PC-3 (cell line): ENCODE measurements at regions of chr9 and their contacts with region 1.

Region 1: DNA sequence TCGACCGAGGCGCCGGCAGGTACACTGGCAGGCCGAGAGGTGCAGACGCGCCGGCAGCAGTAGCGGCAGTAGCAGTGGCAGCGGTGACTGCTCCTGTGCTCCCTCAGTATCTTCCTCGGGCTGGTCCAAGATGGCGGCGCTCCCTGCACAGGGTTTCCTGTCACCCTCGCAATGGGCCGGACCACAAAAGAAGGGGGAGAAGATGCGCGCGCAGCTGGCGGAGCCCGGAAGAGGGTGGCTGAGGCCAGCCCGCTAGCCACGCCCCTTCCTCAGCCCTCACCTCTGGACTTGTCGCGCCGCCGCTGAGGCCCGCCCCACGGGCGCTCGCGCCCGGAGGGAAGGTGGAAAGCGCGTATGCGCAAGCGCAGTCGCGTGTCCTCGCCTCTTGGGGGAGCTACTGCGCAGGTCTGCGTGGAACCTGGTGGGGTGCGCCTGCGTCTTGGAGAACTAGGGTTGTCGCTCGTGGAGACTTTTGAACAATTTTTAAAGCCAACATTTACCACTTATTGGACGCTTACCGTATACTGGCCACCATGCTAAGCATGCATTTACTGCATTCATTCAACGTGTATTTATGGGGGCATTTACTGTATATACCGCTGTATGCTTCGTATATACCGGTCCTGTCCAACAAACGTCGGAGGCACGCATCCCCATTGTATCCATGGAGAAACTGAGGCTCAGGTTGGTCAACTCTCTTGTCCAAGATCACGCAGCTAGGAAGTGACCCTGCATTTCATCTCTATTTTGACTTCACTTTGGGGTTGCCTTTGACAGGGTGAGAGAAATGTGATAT is at the start of gene RAB14:
- DNase-seq: peak; percentile 95
- ATAC-seq: peak; percentile 87
- H3K4me3 ChIP-seq: peak within 1 kb of the TSS; percentile 97
- H3K27ac ChIP-seq: peak within 1 kb of the TSS; percentile 66
- H3K4me1 ChIP-seq: peaks cover 21% of the 10 kb centered on the region
- H3K27me3 ChIP-seq: no peaks in the 10 kb centered on the region
- CTCF ChIP-seq: peak; percentile 53
- total RNA-seq, gene RAB14: 13.8 and 14.9 TPM in 2 replicates

Region 2: GRCh38 chr9:121085661-121086060 is 116.3 kb before region 1 on chr9:
- CTCF ChIA-PET with region 1: no interaction called
- POLR2A ChIA-PET with region 1: interaction called, 33 read pairs
- intact Hi-C with region 1: no loop called
- DNase-seq: no peak
- ATAC-seq: no peak
- H3K4me3 ChIP-seq: no peak overlapping the region
- H3K27ac ChIP-seq: no peak overlapping the region
- H3K4me1 ChIP-seq: no peaks in the 10 kb centered on the region
- H3K27me3 ChIP-seq: no peaks in the 10 kb centered on the region
- CTCF ChIP-seq: no peak

Region 3: DNA sequence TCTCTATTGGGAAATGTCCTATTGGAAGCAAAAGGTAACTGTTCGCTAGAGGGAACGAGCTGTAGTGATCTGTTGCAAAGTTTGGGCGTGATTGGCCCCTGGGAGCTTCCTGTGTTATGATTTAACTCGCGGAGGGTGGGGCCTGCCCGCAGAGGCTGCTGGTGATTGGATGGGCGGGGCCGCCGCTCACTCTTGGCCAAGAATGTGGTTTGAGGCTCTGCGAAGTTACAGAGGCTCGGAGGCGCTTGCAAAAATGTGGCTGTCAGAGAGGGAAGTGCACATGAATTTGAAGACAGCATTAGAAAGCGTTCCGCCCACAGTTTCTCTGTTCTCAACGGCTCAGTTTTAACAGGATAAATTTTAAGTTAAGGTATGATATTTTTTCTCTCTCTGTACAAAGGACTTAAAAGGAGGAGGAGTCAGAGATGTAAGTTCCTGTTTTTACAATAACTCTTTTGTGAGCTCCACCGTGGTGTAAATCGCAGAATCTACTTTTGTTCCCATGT is 80.3 kb before region 1 on chr9:
- CTCF ChIA-PET with region 1: no interaction called
- POLR2A ChIA-PET with region 1: interaction called, 10 read pairs
- intact Hi-C with region 1: no loop called
- DNase-seq: peak; percentile 91
- ATAC-seq: peak; percentile 100
- H3K4me3 ChIP-seq: peak overlapping the region; percentile 72
- H3K27ac ChIP-seq: peak overlapping the region; percentile 26
- H3K4me1 ChIP-seq: peaks cover 14% of the 10 kb centered on the region
- H3K27me3 ChIP-seq: no peaks in the 10 kb centered on the region
- CTCF ChIP-seq: no peak

Region 4: DNA sequence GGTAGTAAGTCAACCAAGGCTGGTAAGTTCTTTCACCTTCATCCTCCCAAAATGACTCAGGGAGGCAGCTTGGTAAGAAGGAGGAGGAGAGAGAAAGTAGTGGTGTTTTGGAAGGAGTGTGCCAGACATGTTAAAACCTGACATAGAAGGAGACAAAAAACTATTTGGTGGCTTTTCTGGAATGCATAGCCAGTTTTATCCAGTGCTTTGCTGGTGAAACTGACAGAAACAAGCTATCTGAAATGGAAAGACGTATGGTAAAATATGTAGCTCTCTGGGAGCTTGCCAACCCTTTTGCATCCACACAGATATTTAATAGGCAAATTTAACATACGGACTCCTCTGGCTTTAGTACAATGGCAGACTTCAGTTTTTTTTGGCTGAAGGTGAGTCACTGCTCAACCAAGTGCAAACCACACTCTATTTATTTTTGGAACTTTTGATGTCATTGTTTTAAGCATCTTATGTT is 45.6 kb before region 1 on chr9:
- CTCF ChIA-PET with region 1: no interaction called
- POLR2A ChIA-PET with region 1: no interaction called
- intact Hi-C with region 1: no loop called
- DNase-seq: peak; percentile 65
- ATAC-seq: peak; percentile 64
- H3K4me3 ChIP-seq: no peak overlapping the region
- H3K27ac ChIP-seq: peak overlapping the region; percentile 62
- H3K4me1 ChIP-seq: peaks cover 31% of the 10 kb centered on the region
- H3K27me3 ChIP-seq: no peaks in the 10 kb centered on the region
- CTCF ChIP-seq: no peak

Region 5: GRCh38 chr9:121326130-121326838 is 124.3 kb after region 1 on chr9:
- CTCF ChIA-PET with region 1: no interaction called
- POLR2A ChIA-PET with region 1: no interaction called
- intact Hi-C with region 1: no loop called
- DNase-seq: peak; percentile 36
- ATAC-seq: no peak; the same call in 1 of the 2 replicates
- H3K4me3 ChIP-seq: no peak overlapping the region
- H3K27ac ChIP-seq: no peak overlapping the region
- H3K4me1 ChIP-seq: peaks cover 8% of the 10 kb centered on the region
- H3K27me3 ChIP-seq: no peaks in the 10 kb centered on the region
- CTCF ChIP-seq: no peak